CD4-positive, alpha-beta memory T cell (primary cell): ENCODE measurements at regions of chr20 and their contacts with region 1.

Region 1: DNA sequence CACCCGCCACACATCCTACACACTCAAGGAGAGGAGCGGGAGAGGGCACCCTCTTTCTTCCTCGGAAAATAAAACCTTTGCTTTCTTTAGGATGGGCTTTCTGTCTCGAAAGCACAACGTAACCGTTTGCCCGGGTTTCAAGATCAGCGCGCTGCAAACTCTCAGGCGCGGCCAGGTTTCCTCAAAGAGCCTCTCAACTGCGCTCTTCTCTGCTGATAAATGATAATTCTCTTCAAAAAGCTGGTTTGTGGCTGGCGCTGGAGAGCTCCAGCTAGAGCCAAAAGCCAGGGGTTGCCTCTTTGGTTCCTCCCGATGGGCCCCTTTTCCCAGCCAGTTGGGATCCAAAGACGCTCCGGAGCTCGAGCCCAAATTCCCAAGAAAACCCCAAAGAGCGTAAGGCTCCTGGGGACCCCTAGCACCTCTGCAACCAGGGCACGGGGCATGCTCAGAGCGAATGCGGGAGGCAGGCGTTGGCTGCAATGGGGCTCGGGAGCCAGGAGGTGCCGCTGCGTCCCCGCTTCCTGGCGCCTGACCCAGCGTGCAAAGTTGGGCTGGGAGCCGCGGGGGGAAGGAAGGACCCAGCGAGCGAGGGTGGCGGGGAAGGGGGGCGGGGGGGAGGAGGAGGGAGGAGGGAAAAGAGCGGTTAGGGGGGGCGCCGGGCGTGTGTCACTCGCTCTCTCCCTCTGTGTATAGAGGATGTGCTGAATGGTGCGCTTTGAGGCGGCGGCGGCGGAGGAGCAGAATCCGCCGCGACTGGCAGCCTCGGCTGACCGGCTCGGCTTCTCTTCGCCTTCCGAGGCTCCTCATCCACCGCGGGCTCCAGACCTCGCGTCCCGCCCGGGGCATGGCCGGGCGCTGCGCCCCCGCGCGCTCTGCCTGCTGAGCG is at the start of gene PLCB1:
- DNase-seq: peak; percentile 79 to 84 (median 80)
- H3K4me3 ChIP-seq: peak within 1 kb of the TSS in 1 of 2 donors; percentile 27
- H3K4me3 Mint-ChIP-seq: peak within 1 kb of the TSS; percentile 84 to 92 (median 88)
- H3K27ac ChIP-seq: no peak within 1 kb of the TSS
- H3K27ac Mint-ChIP-seq: peak within 1 kb of the TSS in 6 of 7 donors; percentile 62 to 77 (median 65)
- H3K4me1 ChIP-seq: peaks cover 19% of the 10 kb centered on the region
- H3K4me1 Mint-ChIP-seq: peaks cover 13 to 34% (median 25%) of the 10 kb centered on the region in 4 donors
- H3K27me3 ChIP-seq: no peaks in the 10 kb centered on the region
- H3K27me3 Mint-ChIP-seq: peaks cover 7 to 17% of the 10 kb centered on the region in 2 donors
- total RNA-seq, gene PLCB1: 9.5 to 9.6 TPM

Region 2: GRCh38 chr20:8019246-8019997 is 112.4 kb before region 1 on chr20 and contains the start of gene TMX4:
- CTCF ChIA-PET with region 1: interaction called, 3 read pairs
- POLR2A ChIA-PET with region 1: interaction called, 4 read pairs
- intact Hi-C with region 1: loop called (anchors 1 kb)
- DNase-seq: peak; percentile 86 to 93 (median 88)
- H3K4me3 ChIP-seq: peak within 1 kb of the TSS; percentile 62 to 88
- H3K4me3 Mint-ChIP-seq: peak within 1 kb of the TSS in 7 of 8 donors; percentile 88 to 96 (median 93)
- H3K27ac ChIP-seq: peak within 1 kb of the TSS; percentile 82
- H3K27ac Mint-ChIP-seq: peak within 1 kb of the TSS; percentile 84 to 97 (median 91)
- H3K4me1 ChIP-seq: peaks cover 57% of the 10 kb centered on the region
- H3K4me1 Mint-ChIP-seq: peaks cover 25 to 42% (median 32%) of the 10 kb centered on the region in 4 donors
- H3K27me3 ChIP-seq: no peaks in the 10 kb centered on the region
- H3K27me3 Mint-ChIP-seq: no peaks in the 10 kb centered on the region
- total RNA-seq, gene TMX4: 71.6 to 74.6 TPM

Region 3: GRCh38 chr20:8153281-8153908 is 21.6 kb after region 1 on chr20:
- CTCF ChIA-PET with region 1: no interaction called
- POLR2A ChIA-PET with region 1: no interaction called
- intact Hi-C with region 1: loop called (anchors 1 kb)
- DNase-seq: peak; percentile 33 to 57 (median 47)
- H3K4me3 ChIP-seq: no peak overlapping the region
- H3K4me3 Mint-ChIP-seq: peak overlapping the region in 7 of 8 donors; percentile 1 to 66 (median 52)
- H3K27ac ChIP-seq: no peak overlapping the region
- H3K27ac Mint-ChIP-seq: peak overlapping the region; percentile 10 to 65 (median 48)
- H3K4me1 ChIP-seq: peaks cover 70% of the 10 kb centered on the region
- H3K4me1 Mint-ChIP-seq: peaks cover 34 to 70% (median 55%) of the 10 kb centered on the region in 4 donors
- H3K27me3 ChIP-seq: no peaks in the 10 kb centered on the region
- H3K27me3 Mint-ChIP-seq: no peaks in the 10 kb centered on the region

Region 4: DNA sequence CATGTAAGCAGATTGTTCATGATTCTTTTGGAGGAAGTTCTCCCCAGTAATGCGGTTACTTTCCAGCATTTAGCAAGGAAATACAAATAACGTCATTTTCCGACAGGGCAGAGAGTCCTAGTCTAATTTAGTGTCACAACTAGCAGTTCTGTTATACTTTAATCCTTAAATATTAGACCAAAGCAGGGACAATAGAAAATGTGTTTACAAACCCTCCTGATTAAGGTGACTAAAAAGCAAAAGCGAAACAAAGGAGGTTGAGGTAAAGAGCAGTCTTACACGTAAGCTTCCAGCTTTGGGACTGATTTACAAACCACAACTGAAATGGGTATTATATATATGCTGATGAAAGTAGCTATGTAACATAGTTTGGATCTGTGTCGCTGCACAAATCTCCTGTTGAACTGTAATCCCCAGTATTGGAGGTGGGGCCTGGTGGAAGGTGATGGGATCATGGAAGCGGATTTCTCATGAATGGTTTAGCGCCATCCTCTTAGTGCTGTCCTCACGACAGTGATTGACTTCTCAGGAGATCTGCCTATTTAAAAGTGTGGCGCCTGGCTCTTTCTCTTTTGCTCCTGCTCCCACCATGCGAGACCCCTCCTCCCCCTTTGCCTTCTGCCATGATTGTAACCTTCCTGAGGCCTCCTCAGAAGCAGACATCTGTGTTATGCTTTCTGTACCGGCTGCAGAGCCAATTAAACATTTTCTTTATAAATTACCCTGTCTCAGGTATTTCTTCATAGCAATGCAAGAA is 82.2 kb after region 1 on chr20:
- CTCF ChIA-PET with region 1: no interaction called
- POLR2A ChIA-PET with region 1: no interaction called
- intact Hi-C with region 1: loop called (anchors 2 kb)
- DNase-seq: peak in 4 of 5 donors; percentile 22 to 39 (median 30)
- H3K4me3 ChIP-seq: peak overlapping the region; percentile 32 to 38
- H3K4me3 Mint-ChIP-seq: peak overlapping the region; percentile 76 to 94 (median 84)
- H3K27ac ChIP-seq: peak overlapping the region; percentile 4
- H3K27ac Mint-ChIP-seq: peak overlapping the region; percentile 85 to 94 (median 91)
- H3K4me1 ChIP-seq: peaks cover 26% of the 10 kb centered on the region
- H3K4me1 Mint-ChIP-seq: peaks cover 22 to 38% (median 28%) of the 10 kb centered on the region in 4 donors
- H3K27me3 ChIP-seq: no peaks in the 10 kb centered on the region
- H3K27me3 Mint-ChIP-seq: no peaks in the 10 kb centered on the region

Region 5: DNA sequence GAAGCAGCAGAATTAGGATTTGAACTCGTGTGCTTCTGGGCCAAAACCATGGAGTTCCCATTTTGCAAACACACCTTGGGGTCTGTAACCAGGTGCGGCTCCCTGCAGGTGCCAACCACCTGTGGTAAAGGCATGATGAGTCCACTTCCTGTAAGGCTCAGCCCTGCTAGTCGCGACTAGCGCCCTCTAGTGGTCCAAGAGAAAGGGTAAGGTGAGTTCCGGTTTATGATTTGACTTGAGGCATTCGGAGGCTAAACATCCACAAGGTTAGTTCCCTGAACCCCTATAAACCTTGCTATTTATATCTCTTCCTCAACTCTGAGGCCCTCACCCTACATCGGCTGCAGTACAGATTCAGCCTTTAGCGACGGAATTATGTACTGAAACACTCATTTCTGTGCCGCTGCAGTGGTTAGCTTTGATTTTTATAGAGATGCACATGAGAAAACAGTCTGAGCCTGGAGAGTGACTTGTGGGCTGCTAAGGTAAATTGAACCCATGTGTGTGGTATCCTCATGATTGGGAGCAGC is 173.7 kb after region 1 on chr20:
- CTCF ChIA-PET with region 1: interaction called, 5 read pairs
- POLR2A ChIA-PET with region 1: interaction called, 3 read pairs
- intact Hi-C with region 1: loop called (anchors 1 kb)
- DNase-seq: peak; percentile 71 to 79 (median 73)
- H3K4me3 ChIP-seq: no peak overlapping the region
- H3K4me3 Mint-ChIP-seq: peak overlapping the region in 3 of 8 donors; percentile 1 to 31 (median 13)
- H3K27ac ChIP-seq: no peak overlapping the region
- H3K27ac Mint-ChIP-seq: peak overlapping the region in 5 of 7 donors; percentile 3 to 67 (median 47)
- H3K4me1 ChIP-seq: no peaks in the 10 kb centered on the region
- H3K4me1 Mint-ChIP-seq: peaks cover 3 to 12% (median 7%) of the 10 kb centered on the region in 4 donors
- H3K27me3 ChIP-seq: no peaks in the 10 kb centered on the region
- H3K27me3 Mint-ChIP-seq: no peaks in the 10 kb centered on the region

Region 6: DNA sequence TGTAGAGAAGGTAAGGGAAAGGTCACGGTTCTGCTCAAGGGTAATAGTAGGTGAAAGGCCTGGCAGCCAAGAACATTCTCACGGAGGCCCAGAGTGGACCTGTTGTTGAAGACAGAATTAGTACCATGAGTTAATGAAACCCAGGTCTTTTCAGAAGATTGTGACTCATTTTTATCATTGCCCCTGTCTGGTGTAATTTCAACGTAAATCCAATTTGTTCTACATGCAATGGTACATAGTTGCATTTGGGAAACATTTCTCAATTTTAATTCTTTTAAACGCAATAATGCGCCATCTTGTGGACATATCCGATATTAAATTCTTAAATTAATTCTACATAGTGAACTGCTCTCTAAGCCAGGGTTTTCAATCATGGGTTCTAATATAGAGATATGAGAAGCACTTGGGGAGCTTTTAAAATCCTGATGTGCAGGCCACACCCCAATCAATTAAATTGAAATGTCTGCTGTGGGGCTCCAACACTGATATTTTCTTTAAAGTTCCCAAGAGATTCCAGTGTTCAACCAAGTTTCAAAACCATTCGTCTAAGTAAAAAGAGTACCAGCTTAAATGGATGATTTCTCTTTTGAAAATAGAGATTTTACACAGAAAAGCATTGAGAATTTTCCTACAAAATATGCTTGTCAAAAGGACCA is 257.7 kb after region 1 on chr20:
- CTCF ChIA-PET with region 1: interaction called, 30 read pairs
- POLR2A ChIA-PET with region 1: no interaction called
- intact Hi-C with region 1: loop called (anchors 1 kb)
- DNase-seq: peak in 4 of 5 donors; percentile 29 to 37 (median 32)
- H3K4me3 ChIP-seq: no peak overlapping the region
- H3K4me3 Mint-ChIP-seq: no peak overlapping the region
- H3K27ac ChIP-seq: no peak overlapping the region
- H3K27ac Mint-ChIP-seq: no peak overlapping the region
- H3K4me1 ChIP-seq: no peaks in the 10 kb centered on the region
- H3K4me1 Mint-ChIP-seq: peaks cover 9 to 18% (median 12%) of the 10 kb centered on the region in 4 donors
- H3K27me3 ChIP-seq: no peaks in the 10 kb centered on the region
- H3K27me3 Mint-ChIP-seq: peaks cover 0 to 1% of the 10 kb centered on the region in 2 donors